ENCODE measurements at regions of chr18 and their contacts with region 1.

Region 1: GRCh38 chr18:76274468-76275289 is 220.4 kb downstream of the ZNF516 start:
- DNase-seq: no peak
- CTCF ChIP-seq: no peak

Region 2: DNA sequence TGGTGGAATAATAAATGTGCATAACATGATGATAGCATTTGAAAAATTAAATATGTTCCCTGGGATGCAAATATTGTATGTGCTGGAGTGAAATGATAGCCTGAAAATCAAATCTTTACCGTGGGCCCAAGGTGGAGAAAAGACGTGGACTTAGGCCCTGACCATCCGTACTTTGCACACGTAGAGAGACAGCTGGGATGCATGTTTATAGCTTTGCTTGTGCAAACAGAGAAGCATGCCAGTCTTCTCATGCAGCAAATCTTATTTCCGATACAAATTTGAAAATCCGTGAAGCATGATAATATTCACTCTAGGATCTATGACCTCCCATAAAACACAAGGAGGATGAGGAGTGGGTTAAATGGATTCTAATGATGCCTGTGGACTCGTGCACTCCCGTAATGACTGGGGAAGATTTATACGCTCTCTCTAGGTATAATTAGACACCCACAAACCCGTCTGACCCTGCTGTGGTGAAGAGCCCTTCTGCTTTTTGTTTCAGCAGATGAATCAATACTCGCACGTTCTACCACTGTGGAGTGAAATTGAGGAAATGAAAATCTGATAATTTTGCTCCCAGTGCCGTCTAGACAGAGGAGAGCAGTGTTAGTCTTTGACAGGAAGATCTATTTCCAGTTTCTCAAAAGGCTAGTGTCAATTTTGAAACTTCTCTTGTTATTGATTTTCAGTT is 1894.6 kb after region 1 on chr18:
- in situ Hi-C with region 1: loop called (anchors 25 kb)
- DNase-seq: no peak
- CTCF ChIP-seq: no peak

Measured in GM13976 (cell line).